ENCODE measurements at regions of chrX and their contacts with region 1.

Region 1: GRCh38 chrX:38175140-38175539 is 45.5 kb downstream of the SRPX start:
- DNase-seq: peak; percentile 62
- H3K4me3 Mint-ChIP-seq: no peak overlapping the region
- H3K27ac Mint-ChIP-seq: peak overlapping the region; percentile 47
- H3K4me1 Mint-ChIP-seq: no peaks in the 10 kb centered on the region
- H3K27me3 Mint-ChIP-seq: peaks cover 59% of the 10 kb centered on the region
- CTCF ChIP-seq: peak; percentile 82

Region 2: DNA sequence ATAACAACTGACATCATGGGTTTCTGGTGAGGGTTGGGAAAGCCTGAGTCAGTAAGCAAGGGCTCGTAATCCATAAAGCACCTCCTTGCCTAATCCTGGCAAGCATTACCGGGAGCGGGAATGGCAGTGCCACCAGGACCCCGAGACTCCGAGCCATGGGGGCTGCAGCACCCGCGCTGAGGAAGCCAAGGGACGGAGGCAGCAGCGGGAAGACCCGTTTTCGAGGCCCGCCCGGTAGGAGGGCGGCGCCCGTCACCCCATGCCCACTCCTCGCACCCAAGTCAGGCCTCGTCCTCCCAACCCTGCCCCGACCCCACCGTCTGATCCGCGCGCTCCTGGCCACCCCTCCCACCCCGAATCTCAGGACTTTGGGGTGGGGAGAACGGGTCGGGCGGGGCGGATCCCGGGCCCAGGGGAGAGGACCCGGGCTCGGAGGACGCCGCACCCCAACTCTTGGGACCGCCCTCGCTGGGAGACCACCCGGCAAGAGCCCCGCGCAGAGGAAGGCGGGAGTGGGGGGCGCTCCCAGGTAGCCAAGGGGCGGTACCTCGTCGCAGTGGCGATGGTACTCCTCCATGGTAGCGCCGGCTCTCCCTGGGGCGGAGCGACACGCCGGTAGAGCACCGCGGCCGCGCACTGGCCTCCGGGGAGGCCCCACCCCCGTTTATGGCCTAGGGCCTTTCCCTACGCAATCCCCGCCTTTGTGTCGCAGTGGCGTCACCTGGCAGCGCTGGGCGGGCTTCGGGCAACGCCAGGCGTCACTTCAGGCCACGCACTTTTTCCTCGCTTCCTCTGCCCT is 328.0 kb before region 1 on chrX and contains the start of gene DYNLT3:
- CTCF ChIA-PET with region 1: no interaction called
- POLR2A ChIA-PET with region 1: interaction called, 3 read pairs
- intact Hi-C with region 1: loop called (anchors 1 kb)
- DNase-seq: peak; percentile 62
- H3K4me3 Mint-ChIP-seq: peak within 1 kb of the TSS; percentile 75
- H3K27ac Mint-ChIP-seq: peak within 1 kb of the TSS; percentile 39
- H3K4me1 Mint-ChIP-seq: no peaks in the 10 kb centered on the region
- H3K27me3 Mint-ChIP-seq: peaks cover 33% of the 10 kb centered on the region
- CTCF ChIP-seq: no peak
- total RNA-seq, gene DYNLT3: 19.3 and 30.5 TPM in 2 replicates